Head of caudate nucleus (tissue), 42 donors: ENCODE measurements at regions of chr4 and their contacts with region 1.

Region 1: DNA sequence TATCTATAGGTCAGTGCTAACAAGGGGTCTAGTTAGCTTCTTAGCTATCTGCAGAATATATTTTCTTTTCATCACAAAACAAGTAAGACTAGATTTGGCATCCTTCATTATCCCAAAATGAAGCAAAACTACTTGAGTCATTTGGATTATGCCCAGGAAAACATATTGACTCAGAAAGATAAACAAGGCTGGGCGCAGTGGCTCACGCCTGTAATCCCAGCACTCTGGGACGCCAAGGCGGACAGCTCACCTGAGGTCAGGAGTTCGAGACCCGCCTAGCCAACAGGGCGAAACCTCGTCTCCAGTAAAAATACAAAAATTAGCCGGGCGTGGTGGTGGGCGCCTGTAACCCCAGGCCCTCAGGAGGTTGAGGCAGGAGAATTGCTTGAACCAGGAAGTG is 18.0 kb upstream of the MND1 start:
- DNase-seq: no peak

Region 2: DNA sequence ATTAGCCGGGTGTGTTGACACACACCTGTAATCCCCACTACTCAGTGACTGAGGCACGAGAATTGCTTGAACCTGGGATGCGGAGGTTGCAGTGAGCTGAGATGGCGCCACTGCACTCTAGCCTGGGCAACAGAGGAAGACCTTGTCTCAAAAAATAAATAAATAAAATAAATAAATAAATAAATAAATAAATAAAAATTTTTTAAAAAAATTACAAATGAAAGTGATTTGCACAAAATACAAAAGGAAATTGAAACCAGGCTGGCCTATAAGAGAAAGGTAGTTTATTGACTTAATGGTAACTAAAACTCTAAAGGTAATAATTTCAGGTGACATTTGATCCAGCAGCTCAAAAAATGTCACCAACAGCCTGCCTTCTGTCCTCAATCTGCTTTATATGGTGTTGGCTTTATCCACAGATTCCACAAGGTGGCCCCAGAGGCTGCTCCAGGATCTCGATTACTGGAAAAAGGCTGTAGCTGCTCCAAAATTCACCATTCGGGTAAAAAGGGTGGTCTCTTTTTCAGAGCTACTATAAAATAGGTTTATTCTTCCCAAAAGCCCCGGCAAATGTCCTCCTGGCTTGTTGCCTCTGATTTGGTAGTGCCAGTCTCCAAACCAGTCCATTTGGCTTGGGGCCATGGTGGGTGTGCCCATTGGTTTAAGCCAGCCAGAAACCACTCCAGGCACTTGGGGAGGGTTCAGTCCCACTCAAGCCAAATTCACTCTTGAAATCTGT is 183.6 kb before region 1 on chr4:
- intact Hi-C with region 1: loop called (anchors 5 kb)
- DNase-seq: peak; percentile 57 to 92 (median 81)

Region 3: GRCh38 chr4:153249199-153250041 is 77.1 kb before region 1 on chr4:
- intact Hi-C with region 1: loop called (anchors 10 kb)
- DNase-seq: peak in 41 of 42 donors; percentile 58 to 92 (median 81)